K562 (cell line): ENCODE measurements at regions of chr10 and their contacts with region 1.

Region 1: DNA sequence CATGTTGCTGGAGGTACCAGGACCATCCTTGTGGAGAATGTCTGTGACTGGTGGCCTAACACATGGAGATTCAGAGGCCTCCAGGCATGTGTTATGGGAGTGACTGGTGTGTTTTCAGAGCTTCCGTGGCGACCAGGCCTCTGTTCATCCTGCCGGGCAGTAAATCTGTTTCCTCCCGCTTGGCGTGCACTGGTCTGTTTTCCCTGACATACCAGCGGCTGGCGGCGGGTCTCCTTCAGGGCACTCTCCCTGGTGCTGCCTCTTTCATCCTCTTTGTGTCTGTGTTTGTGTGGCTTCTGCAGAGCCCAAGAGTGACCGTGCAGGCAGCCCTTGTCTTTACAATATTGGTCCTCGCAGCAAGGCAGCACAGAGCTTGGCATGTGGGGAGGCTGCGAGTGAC is 385.1 kb upstream of the MKI67 start:
- DNase-seq: no peak
- ATAC-seq: no peak
- H3K4me3 ChIP-seq: no peak overlapping the region
- H3K27ac ChIP-seq: no peak overlapping the region
- H3K4me1 ChIP-seq: no peaks in the 10 kb centered on the region
- H3K27me3 ChIP-seq: no peaks in the 10 kb centered on the region
- CTCF ChIP-seq: no peak
- EP300 ChIP-seq: no peak
- POLR2A ChIP-seq: no peak
- RAD21 ChIP-seq: no peak

Region 2: DNA sequence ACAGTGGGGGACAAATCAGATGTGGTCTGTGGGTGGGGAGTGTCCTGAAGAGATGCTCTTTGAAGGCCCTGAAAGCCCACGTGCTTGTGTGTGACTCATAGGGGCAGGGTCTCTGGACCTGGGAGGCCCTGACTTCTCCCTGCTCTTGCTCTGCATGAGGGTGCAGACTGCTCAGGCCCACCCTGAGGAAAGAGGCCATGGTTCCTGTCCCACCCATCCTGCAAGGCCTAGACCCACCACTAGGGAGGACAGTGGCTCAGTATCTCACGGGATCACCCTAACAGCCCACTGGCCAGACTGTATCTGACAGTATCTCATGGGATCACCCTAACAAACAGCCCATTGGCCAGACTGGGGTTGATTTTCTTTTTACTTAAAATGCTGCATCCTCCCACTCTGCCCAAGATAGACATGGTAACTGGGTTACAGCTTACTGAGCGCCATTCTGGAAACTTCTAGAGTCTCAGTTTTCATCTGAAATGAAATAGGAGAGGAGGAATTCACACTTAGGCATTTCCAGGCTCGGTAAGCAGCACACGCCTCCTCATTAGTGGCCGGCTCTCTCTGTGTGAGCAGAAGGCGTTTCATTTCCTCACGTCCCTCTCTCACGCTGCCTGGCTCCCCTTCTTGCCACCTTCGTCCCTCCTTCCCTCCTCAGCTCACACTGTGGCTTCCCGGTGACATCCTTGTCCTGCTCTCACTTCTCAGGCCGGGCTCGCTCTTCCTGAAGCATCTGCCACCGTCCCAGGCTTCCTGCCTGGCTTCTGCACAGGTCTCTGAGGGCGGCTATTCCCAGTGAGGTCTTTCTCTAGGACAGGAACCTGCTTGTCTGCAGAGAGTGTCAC is 1867.5 kb after region 1 on chr10:
- CTCF ChIA-PET with region 1: no interaction called
- POLR2A ChIA-PET with region 1: no interaction called
- in situ Hi-C with region 1: no loop called
- intact Hi-C with region 1: loop called (anchors 10 kb)
- DNase-seq: peak; percentile 4 to 37 (median 26)
- ATAC-seq: peak; percentile 87
- H3K4me3 ChIP-seq: no peak overlapping the region
- H3K27ac ChIP-seq: no peak overlapping the region
- H3K4me1 ChIP-seq: no peaks in the 10 kb centered on the region
- H3K27me3 ChIP-seq: no peaks in the 10 kb centered on the region; a peak in 1 of 5 replicates
- CTCF ChIP-seq: peak in 2 of 3 experiments; percentile 22 to 35; a peak in 1 of 6 replicates
- EP300 ChIP-seq: no peak
- POLR2A ChIP-seq: no peak
- RAD21 ChIP-seq: no peak